ENCODE measurements at regions of chr1 and their contacts with region 1.

Region 1: GRCh38 chr1:52927212-52928014 is at the start of gene SCP2:
- DNase-seq: peak; percentile 93
- total RNA-seq, gene SCP2: 101 to 137 TPM

Region 2: DNA sequence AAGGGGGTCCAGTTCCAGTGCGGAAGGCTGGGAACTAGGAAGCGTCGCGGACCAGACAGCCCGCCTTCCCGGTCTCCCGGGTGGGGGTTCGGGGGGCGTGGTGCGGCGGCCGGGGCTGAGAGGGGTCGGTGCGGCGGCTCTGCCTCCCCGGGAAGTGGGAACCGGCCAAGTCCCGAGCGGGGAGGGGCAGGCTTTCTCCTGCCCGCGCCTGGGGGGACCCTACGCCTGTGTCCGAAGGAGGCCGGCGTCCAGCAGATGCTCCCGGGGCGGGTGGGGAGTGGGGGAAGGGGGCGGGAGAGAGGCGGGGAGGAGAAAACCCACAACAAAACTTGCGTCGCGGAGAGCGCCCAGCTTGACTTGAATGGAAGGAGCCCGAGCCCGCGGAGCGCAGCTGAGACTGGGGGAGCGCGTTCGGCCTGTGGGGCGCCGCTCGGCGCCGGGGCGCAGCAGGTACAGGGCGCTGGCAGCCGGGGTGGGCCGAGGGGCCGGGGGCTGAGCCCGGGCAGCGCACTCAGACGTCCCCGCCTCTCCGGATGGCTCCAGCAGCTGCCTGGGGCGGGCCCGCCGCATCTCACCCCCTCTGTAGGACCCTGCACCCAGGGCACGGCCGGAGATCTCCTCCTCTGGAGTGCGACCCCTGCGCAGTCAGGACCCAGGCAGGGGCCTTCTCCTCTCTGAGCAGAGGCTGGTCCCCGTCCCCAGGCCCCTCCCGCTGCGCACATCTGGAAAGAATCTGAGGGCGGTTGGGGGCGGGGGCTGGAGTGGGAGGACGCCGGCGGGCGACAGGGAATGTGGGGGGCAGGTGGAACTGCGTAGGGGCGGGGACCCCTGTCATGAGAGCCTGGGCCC is 134.7 kb after region 1 on chr1 and contains the start of gene PODN:
- intact Hi-C with region 1: loop called in 1 of 2 experiments (anchors 10 kb)
- DNase-seq: peak; percentile 89
- total RNA-seq, gene PODN: 155 to 285 TPM

Region 3: GRCh38 chr1:53182111-53182593 is 254.7 kb after region 1 on chr1:
- intact Hi-C with region 1: loop called in 1 of 2 experiments (anchors 10 kb)
- DNase-seq: peak; percentile 94

Region 4: DNA sequence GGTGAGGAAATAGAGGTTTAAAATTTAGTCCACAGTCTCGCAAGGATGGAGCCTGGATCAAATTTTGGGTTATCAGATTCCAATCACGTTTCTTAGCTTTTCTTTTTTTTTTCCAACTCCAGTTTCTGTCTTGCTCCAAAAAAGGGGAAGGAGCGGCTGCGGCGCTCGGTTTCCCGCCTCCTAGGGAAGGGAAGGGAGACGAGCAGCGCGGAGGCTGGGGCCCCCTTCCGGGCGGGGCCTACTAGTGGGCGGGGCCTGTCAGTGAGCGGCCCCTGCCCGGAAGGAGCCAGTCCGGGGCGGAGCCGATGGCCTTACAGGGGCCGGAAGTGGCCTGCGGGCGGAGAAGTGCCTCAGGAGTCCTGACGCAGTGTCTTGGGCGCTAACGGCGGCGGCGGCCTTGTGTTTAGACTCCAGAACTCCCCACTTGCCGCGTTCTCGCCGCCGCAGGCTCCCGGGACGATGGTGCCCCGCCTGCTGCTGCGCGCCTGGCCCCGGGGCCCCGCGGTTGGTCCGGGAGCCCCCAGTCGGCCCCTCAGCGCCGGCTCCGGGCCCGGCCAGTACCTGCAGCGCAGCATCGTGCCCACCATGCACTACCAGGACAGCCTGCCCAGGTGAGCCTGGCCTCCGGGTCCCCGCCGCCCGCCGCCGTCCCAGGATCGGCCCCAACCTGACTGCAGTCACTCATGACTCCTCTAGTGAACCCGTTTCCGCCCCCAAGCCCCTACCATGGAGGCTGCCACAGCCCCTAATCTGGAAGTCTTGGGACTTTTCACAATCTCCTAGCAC is 269.3 kb after region 1 on chr1 and contains the start of gene CPT2:
- intact Hi-C with region 1: loop called in 1 of 2 experiments (anchors 10 kb)
- DNase-seq: peak; percentile 99
- total RNA-seq, gene CPT2: 9.6 to 16.6 TPM